ENCODE measurements at regions of chr6 and their contacts with region 1.

Region 1: DNA sequence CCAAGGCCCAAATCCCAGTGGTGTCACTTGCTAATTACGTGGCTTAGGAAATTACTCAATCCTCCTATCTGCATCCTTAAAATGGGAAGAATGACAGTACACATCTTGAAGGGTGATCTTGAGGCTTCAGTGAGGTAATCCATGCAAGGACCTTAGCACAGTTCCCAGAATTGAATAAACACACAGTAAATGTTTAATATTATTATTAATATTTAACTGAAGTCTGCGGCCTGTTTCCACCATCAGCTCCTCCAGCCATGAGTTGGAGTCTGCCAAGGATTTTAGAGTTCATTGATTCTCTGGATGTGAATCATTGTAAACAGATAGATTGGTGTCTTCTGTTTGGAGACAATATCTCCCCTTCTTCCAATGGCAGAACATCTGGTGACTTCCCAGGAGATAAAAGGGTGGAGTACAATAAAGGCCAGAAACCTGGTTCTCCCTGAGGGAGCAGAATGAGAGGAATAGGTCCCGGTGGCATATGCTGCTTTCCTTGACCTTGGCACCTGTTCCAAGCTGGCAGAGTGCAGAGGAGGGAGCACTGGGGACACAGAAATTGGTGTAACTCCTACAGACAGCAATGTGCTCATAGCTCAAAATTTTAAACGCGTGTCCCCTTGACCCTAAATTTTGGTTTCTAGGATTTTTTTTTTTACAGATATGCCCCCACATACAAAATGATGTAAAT is 25.4 kb downstream of the UNC5CL start:
- DNase-seq: no peak
- H3K4me3 ChIP-seq: no peak overlapping the region
- H3K27ac ChIP-seq: no peak overlapping the region
- H3K4me1 ChIP-seq: no peaks in the 10 kb centered on the region
- H3K27me3 ChIP-seq: no peaks in the 10 kb centered on the region
- CTCF ChIP-seq: no peak
- EP300 ChIP-seq: no peak
- POLR2A ChIP-seq: no peak

Region 2: GRCh38 chr6:41059556-41059955 is 45.9 kb after region 1 on chr6:
- intact Hi-C with region 1: loop called in 1 of 4 experiments (anchors 5 kb)
- DNase-seq: no peak
- H3K4me3 ChIP-seq: no peak overlapping the region
- H3K27ac ChIP-seq: no peak overlapping the region
- H3K4me1 ChIP-seq: no peaks in the 10 kb centered on the region
- H3K27me3 ChIP-seq: no peaks in the 10 kb centered on the region
- CTCF ChIP-seq: no peak
- EP300 ChIP-seq: no peak
- POLR2A ChIP-seq: no peak

Measured in ovary (tissue), 10 donors.